Transverse colon (tissue), 4 donors: ENCODE measurements at regions of chr4 and their contacts with region 1.

Region 1: GRCh38 chr4:46993075-46994006 is at the start of gene GABRA4:
- DNase-seq: no peak
- H3K4me3 ChIP-seq: peak within 1 kb of the TSS in 3 of 4 donors; percentile 1 to 36 (median 23)
- H3K27ac ChIP-seq: no peak within 1 kb of the TSS
- H3K4me1 ChIP-seq: peaks cover 0 to 15% (median 12%) of the 10 kb centered on the region in 4 donors
- H3K27me3 ChIP-seq: peaks cover 55% of the 10 kb centered on the region
- CTCF ChIP-seq: no peak
- EP300 ChIP-seq: no peak
- POLR2A ChIP-seq: no peak
- total RNA-seq, gene GABRA4: 0.16 TPM in 1 of 4 donors, not detected in the others

Region 2: GRCh38 chr4:46715468-46715867 is 277.9 kb before region 1 on chr4:
- in situ Hi-C with region 1: no loop called
- intact Hi-C with region 1: no loop called
- DNase-seq: no peak
- H3K4me3 ChIP-seq: no peak overlapping the region
- H3K27ac ChIP-seq: no peak overlapping the region
- H3K4me1 ChIP-seq: no peaks in the 10 kb centered on the region
- H3K27me3 ChIP-seq: no peaks in the 10 kb centered on the region
- CTCF ChIP-seq: no peak
- EP300 ChIP-seq: no peak
- POLR2A ChIP-seq: no peak

Region 3: DNA sequence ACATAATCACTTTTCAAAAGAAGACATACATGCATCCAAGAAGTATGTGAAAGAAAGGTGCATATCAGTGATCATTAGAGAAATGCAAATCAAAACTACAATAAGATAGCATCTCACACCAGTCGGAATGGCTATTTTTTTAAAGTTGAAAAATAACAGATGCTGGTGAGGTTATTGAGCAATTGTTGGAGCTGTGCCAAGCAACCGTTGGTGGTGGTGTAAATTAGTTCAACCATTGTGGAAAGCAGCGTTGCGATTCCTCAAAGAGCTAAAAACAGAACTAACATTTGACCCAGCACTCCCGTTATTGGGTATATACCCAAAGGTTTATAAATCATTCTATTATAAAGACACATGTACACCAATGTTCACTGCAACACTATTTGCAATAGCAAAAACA is 98.5 kb before region 1 on chr4:
- in situ Hi-C with region 1: no loop called
- intact Hi-C with region 1: no loop called
- DNase-seq: no peak
- H3K4me3 ChIP-seq: no peak overlapping the region
- H3K27ac ChIP-seq: no peak overlapping the region
- H3K4me1 ChIP-seq: no peaks in the 10 kb centered on the region
- H3K27me3 ChIP-seq: no peaks in the 10 kb centered on the region
- CTCF ChIP-seq: no peak
- EP300 ChIP-seq: no peak
- POLR2A ChIP-seq: no peak

Region 4: DNA sequence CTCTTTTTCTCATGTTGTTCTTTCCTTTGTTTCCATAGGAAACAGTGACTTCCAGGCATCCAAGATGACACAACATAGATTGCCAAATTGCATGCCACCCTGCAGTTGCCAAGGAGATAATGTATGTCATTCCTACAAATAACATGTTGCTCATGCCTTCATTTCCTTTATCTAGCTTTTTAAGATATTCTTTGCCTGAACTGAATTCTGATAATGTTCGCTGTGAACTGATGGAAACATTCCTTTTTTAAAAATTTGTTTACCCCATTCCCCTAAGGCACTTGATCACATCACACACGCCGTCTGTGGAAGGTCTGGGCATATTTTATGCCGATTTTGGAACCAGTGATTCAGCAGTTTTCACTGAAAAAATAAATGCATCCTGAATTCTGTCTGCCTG is 46.3 kb before region 1 on chr4:
- in situ Hi-C with region 1: no loop called
- intact Hi-C with region 1: loop called (anchors 1 kb)
- DNase-seq: no peak
- H3K4me3 ChIP-seq: no peak overlapping the region
- H3K27ac ChIP-seq: no peak overlapping the region
- H3K4me1 ChIP-seq: no peaks in the 10 kb centered on the region
- H3K27me3 ChIP-seq: no peaks in the 10 kb centered on the region
- CTCF ChIP-seq: no peak
- EP300 ChIP-seq: no peak
- POLR2A ChIP-seq: no peak

Region 5: GRCh38 chr4:46958742-46959488 is 34.4 kb before region 1 on chr4:
- in situ Hi-C with region 1: no loop called
- intact Hi-C with region 1: no loop called
- DNase-seq: no peak
- H3K4me3 ChIP-seq: no peak overlapping the region
- H3K27ac ChIP-seq: no peak overlapping the region
- H3K4me1 ChIP-seq: no peaks in the 10 kb centered on the region
- H3K27me3 ChIP-seq: no peaks in the 10 kb centered on the region
- CTCF ChIP-seq: no peak
- EP300 ChIP-seq: no peak
- POLR2A ChIP-seq: no peak